ENCODE measurements at regions of chr17 and their contacts with region 1.

Region 1: DNA sequence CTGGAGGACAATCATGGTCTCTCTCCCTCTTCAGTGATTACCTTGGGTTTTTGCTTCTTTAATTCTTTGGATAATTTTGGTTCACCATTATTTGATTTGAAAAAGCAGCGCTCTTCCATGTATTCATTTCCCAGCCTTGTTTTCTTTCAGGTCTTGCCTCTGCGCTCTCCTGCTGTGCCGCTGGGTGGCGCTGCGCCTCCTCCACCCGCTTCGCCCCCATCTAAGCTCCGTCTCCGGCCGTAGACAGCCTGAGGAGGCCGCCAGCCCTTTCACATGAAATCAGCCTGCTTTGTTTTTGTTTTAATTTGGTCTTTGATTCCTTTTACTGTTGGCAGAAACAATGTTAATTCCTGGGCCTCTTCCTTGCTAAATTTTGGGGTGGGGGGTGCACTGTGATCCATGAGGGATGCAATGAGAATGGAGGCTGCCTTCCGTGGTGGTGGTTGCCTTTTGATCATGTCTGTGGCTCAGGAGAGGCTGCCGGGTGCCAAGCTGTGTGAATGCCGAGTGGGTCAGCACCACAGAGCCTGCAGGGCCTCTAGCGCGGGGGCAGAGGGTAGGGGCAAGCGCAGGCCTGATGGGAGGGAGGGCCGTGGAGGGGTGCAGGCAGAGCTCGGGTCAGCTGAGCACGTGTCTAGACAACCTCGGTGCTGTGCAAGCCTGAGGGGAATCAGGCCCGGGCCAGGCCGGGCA is 64.1 kb downstream of the PLD6 start:
- DNase-seq: peak; percentile 63 to 85
- ATAC-seq: peak in 1 of 2 experiments; percentile 67; a peak in 3 of 6 replicates
- H3K4me3 ChIP-seq: no peak overlapping the region
- H3K27ac ChIP-seq: peak overlapping the region in 1 of 2 experiments; percentile 63; a peak in 3 of 6 replicates
- H3K4me1 ChIP-seq: peaks cover 28% of the 10 kb centered on the region
- CTCF ChIP-seq: peak; percentile 83
- EP300 ChIP-seq: no peak
- POLR2A ChIP-seq: no peak
- RAD21 ChIP-seq: peak; percentile 67 to 78

Region 2: DNA sequence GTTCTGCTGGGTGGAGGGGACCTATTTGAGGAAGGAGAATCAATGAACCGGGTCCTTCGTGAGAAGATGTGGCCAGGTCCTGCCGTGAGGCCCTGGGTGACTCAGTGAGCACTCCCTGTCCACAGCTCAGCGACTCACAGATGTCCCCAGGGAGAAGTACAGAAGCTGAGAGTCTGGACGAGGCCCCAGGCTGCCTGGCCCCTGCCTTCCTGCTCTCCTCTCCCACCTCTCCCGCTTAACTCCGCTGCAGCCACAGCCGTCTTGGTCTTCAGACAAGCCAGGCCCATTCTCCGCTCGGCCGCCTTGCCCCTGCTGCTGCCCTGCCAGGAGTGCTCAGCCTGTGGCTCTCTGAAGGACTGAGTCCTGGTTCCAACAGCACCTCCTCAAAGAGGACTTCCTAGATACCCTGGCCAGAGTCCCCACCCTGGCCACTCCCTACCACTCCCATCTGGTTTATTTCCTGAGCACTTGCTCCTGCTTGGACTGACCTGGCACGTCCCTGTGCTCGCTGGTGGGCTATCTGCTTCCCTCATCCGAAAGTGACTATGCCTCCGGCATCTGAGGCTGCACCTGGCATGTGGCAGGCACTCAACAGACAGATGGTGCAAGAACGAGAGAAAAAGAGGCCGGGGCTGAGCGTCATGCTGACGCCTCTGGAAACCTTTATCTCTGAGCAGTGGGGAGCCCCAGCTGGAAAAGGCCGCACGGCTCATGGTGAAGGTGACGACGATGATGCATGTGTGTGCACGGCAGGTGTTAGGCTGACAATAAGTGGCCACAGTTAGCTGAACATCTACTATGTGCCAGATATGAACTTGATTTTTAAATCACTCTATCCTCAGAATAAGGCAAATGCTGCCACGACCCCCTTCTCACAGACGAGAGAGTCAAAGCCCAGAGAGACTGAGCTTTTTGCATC is 160.9 kb before region 1 on chr17:
- CTCF ChIA-PET with region 1: no interaction called
- POLR2A ChIA-PET with region 1: no interaction called
- DNase-seq: no peak
- ATAC-seq: no peak; a peak in 2 of 6 replicates
- H3K4me3 ChIP-seq: no peak overlapping the region
- H3K27ac ChIP-seq: no peak overlapping the region
- H3K4me1 ChIP-seq: no peaks in the 10 kb centered on the region
- CTCF ChIP-seq: no peak
- EP300 ChIP-seq: no peak
- POLR2A ChIP-seq: 0 out of 2 replicates have a peak, but pooled peaks have one; percentile 5
- RAD21 ChIP-seq: no peak

Region 3: DNA sequence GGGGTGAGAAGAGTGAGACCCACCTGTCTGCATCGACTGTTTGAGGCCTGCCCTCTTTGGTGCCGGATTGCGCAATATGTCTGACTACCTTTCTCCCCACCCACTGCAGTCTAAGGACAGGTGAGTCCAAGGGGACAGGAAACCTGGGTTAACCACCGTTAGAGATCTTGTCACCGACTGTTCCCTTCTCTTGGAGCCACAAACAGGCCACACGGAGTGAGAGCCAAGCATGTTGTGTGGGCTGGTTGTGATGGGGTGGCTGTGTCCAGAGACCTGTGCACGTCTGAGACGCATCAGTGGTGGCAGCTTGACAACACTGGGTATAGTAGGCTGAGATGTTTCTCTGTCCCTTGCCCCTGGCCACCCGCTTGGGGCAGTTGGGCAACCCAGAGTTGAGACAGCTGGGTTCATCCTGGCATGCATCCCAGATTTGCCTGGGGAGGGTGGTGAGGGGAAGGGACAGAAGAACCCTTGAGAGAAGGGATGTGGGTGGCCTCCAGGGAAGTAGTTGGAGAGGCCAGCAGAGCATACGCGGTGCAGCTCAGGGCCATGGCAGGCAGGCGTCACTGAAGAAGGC is 78.4 kb before region 1 on chr17:
- CTCF ChIA-PET with region 1: no interaction called
- POLR2A ChIA-PET with region 1: no interaction called
- DNase-seq: peak in 1 of 2 experiments; percentile 56
- ATAC-seq: peak; percentile 25 to 38; a peak in 5 of 6 replicates
- H3K4me3 ChIP-seq: no peak overlapping the region
- H3K27ac ChIP-seq: peak overlapping the region; percentile 0 to 43; a peak in 4 of 6 replicates
- H3K4me1 ChIP-seq: peaks cover 95% of the 10 kb centered on the region
- CTCF ChIP-seq: no peak
- EP300 ChIP-seq: no peak
- POLR2A ChIP-seq: no peak
- RAD21 ChIP-seq: no peak

Region 4: GRCh38 chr17:17104494-17104893 is 37.5 kb before region 1 on chr17:
- CTCF ChIA-PET with region 1: interaction called, 11 read pairs
- POLR2A ChIA-PET with region 1: no interaction called
- DNase-seq: no peak
- ATAC-seq: no peak
- H3K4me3 ChIP-seq: no peak overlapping the region
- H3K27ac ChIP-seq: no peak overlapping the region; a peak in 1 of 6 replicates
- H3K4me1 ChIP-seq: peaks cover 46% of the 10 kb centered on the region
- CTCF ChIP-seq: no peak
- EP300 ChIP-seq: no peak
- POLR2A ChIP-seq: no peak
- RAD21 ChIP-seq: no peak

Region 5: DNA sequence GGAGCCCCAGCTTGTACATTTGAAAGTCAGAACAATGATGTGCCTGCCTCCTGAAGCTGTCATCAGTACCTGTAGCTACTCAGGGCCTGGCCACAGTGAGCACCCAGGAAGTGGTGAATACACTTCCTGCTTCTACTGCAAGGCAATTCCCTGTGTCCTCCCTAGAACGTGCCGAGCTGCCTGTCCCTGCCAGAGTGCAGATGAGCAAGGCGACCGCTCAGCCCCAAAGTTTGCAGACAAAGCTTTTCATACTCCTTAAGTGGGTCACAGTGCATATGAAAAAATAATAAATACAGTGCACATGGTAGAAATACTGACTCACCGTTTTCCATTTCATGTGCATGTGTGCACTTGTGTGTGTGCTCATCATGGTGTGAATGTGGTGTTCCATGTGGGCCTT is 22.5 kb before region 1 on chr17:
- CTCF ChIA-PET with region 1: interaction called, 36 read pairs
- POLR2A ChIA-PET with region 1: no interaction called
- DNase-seq: peak in 1 of 2 experiments; percentile 34
- ATAC-seq: peak; percentile 35 to 47; a peak in 5 of 6 replicates
- H3K4me3 ChIP-seq: no peak overlapping the region
- H3K27ac ChIP-seq: peak overlapping the region; percentile 29 to 72; a peak in 5 of 6 replicates
- H3K4me1 ChIP-seq: peaks cover 60% of the 10 kb centered on the region
- CTCF ChIP-seq: no peak
- EP300 ChIP-seq: no peak
- POLR2A ChIP-seq: no peak
- RAD21 ChIP-seq: no peak

Region 6: DNA sequence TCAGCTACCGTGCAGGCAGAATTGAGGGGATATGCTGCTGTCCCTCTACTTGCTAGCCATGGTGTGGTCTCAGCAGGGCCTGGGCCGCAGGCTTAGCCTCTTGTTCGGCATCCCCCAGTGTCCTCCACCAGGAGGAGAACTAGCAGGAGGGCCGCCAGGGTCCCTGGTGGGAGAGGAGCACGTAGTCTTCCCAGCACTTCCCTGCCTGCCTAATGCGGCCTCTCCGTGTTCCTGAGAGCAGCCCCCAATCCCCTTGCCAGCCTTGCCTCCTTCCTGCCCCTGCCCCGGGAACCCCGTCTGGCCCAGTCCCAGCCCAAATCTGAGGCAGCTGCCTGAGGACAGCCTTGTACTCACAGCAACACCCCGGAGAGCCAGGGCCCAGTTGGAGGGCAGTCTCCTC is 26.0 kb after region 1 on chr17:
- CTCF ChIA-PET with region 1: interaction called, 25 read pairs
- POLR2A ChIA-PET with region 1: no interaction called
- DNase-seq: no peak
- ATAC-seq: peak in 1 of 2 experiments; percentile 16; a peak in 3 of 6 replicates
- H3K4me3 ChIP-seq: no peak overlapping the region
- H3K27ac ChIP-seq: no peak overlapping the region
- H3K4me1 ChIP-seq: no peaks in the 10 kb centered on the region
- CTCF ChIP-seq: no peak
- EP300 ChIP-seq: no peak
- POLR2A ChIP-seq: no peak
- RAD21 ChIP-seq: no peak

Region 7: GRCh38 chr17:17191346-17191792 is 49.4 kb after region 1 on chr17:
- CTCF ChIA-PET with region 1: interaction called, 15 read pairs
- POLR2A ChIA-PET with region 1: no interaction called
- DNase-seq: no peak
- ATAC-seq: peak; percentile 6 to 26; a peak in 3 of 6 replicates
- H3K4me3 ChIP-seq: no peak overlapping the region
- H3K27ac ChIP-seq: 0 out of 6 replicates have a peak overlapping the region, but pooled peaks of 1 of the 2 experiments have one; percentile 14
- H3K4me1 ChIP-seq: peaks cover 29% of the 10 kb centered on the region
- CTCF ChIP-seq: no peak
- EP300 ChIP-seq: no peak
- POLR2A ChIP-seq: 0 out of 2 replicates have a peak, but pooled peaks have one; percentile 5
- RAD21 ChIP-seq: no peak

Region 8: GRCh38 chr17:17237026-17237799 is 95.2 kb after region 1 on chr17 and contains the start of gene FLCN:
- CTCF ChIA-PET with region 1: interaction called, 11 read pairs
- POLR2A ChIA-PET with region 1: no interaction called
- DNase-seq: peak; percentile 91 to 92
- ATAC-seq: peak; percentile 90 to 92
- H3K4me3 ChIP-seq: peak within 1 kb of the TSS; percentile 85
- H3K27ac ChIP-seq: peak within 1 kb of the TSS; percentile 82 to 97
- H3K4me1 ChIP-seq: peaks cover 16% of the 10 kb centered on the region
- CTCF ChIP-seq: no peak
- EP300 ChIP-seq: no peak
- POLR2A ChIP-seq: peak; percentile 85
- RAD21 ChIP-seq: no peak
- polyA plus RNA-seq, gene FLCN: 14.2 and 16.1 TPM in 2 replicates

Measured in A549 (cell line).